Endothelial cell of umbilical vein (primary cell): ENCODE measurements at regions of chr10 and their contacts with region 1.

Region 1: DNA sequence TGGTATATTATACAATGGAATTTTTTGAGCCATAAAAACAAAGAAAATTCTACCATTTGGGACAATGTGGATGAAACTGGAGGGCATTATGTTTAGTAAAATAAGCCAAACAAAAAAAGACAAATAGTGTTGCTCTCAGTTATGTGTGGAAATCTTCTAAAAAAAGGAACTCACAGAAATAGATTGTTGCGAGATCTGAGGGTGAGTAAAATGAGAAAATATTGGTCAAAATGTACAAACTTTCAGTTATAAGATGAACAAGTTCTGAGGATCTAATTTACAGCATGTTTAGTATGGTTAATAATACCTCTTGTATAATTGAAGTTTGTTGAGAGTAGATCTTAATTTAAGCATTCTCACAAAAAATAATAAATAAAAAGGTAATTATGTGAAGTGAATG is 291.2 kb downstream of the KIF20B start:
- DNase-seq: no peak
- H3K4me3 ChIP-seq: no peak overlapping the region
- H3K27ac ChIP-seq: no peak overlapping the region
- H3K4me1 ChIP-seq: no peaks in the 10 kb centered on the region
- H3K27me3 ChIP-seq: no peaks in the 10 kb centered on the region
- CTCF ChIP-seq: no peak
- POLR2A ChIP-seq: no peak

Region 2: GRCh38 chr10:90023950-90024349 is 31.4 kb after region 1 on chr10:
- CTCF ChIA-PET with region 1: no interaction called
- POLR2A ChIA-PET with region 1: no interaction called
- dilution Hi-C with region 1: no loop called
- intact Hi-C with region 1: loop called (anchors 1 kb)
- DNase-seq: no peak
- H3K4me3 ChIP-seq: no peak overlapping the region
- H3K27ac ChIP-seq: no peak overlapping the region
- H3K4me1 ChIP-seq: no peaks in the 10 kb centered on the region
- H3K27me3 ChIP-seq: no peaks in the 10 kb centered on the region
- CTCF ChIP-seq: no peak
- POLR2A ChIP-seq: no peak